IMR-90 (cell line): ENCODE measurements at regions of chr1 and their contacts with region 1.

Region 1: GRCh38 chr1:32291708-32292492 is at the start of gene HDAC1:
- DNase-seq: peak; percentile 91
- ATAC-seq: peak; percentile 99
- H3K4me3 ChIP-seq: peak within 1 kb of the TSS; percentile 98
- H3K27ac ChIP-seq: peak within 1 kb of the TSS; percentile 87
- H3K4me1 ChIP-seq: 0 out of 2 replicates have a peak, but pooled peaks cover 2% of the 10 kb centered on the region
- H3K27me3 ChIP-seq: no peaks in the 10 kb centered on the region
- CTCF ChIP-seq: no peak
- POLR2A ChIP-seq: no peak; the same call in 1 of the 2 replicates
- RAD21 ChIP-seq: no peak
- total RNA-seq, gene HDAC1: 88.9 and 95.5 TPM in 2 replicates

Region 2: DNA sequence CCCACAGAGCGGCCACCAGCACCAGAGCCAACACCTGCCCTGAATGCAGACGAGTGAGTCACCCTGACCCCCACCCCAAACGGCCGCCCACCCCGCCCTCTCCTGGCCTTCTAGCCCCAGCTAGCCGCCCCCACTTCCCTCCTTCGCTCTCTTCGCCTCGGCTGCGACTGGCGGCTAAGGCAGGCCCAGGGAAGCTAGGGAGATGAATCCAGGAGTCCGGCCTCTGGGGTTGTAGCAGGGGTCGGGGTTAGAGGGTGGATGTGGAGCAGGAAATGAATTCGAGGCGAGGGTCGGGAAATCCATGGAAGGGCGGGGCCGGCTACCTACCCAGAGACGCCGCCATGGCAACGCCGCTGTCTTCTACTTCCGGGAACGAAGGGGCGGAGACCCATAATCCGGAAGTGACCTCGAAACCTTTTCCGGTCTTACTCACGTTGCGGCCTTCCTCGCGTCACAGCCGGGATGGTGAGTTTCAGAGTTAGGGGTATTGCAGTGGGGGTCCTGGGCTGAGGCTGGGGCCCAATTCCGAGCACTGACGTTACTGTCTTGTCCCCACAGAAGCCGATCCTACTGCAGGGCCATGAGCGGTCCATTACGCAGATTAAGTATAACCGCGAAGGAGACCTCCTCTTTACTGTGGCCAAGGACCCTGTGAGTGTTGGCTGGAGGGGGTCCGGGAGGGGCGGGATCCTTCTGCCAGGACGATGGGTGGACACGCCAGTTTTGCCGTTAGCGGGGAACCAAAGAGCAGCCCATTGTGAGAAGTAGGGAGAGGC is 69.7 kb before region 1 on chr1 and contains the starts of genes EIF3I and TMEM234:
- CTCF ChIA-PET with region 1: no interaction called
- POLR2A ChIA-PET with region 1: no interaction called
- dilution Hi-C with region 1: no loop called
- in situ Hi-C with region 1: no loop called
- intact Hi-C with region 1: loop called (anchors 5 kb)
- DNase-seq: peak; percentile 91
- ATAC-seq: peak; percentile 89
- H3K4me3 ChIP-seq: peak within 1 kb of the TSS; percentile 84
- H3K27ac ChIP-seq: peak within 1 kb of the TSS; percentile 86
- H3K4me1 ChIP-seq: peaks cover 12% of the 10 kb centered on the region
- H3K27me3 ChIP-seq: no peaks in the 10 kb centered on the region
- CTCF ChIP-seq: no peak
- POLR2A ChIP-seq: peak; percentile 94
- RAD21 ChIP-seq: no peak
- total RNA-seq, gene EIF3I: 574 and 716 TPM in 2 replicates
- total RNA-seq, gene TMEM234: 10.0 and 10.8 TPM in 2 replicates

Region 3: DNA sequence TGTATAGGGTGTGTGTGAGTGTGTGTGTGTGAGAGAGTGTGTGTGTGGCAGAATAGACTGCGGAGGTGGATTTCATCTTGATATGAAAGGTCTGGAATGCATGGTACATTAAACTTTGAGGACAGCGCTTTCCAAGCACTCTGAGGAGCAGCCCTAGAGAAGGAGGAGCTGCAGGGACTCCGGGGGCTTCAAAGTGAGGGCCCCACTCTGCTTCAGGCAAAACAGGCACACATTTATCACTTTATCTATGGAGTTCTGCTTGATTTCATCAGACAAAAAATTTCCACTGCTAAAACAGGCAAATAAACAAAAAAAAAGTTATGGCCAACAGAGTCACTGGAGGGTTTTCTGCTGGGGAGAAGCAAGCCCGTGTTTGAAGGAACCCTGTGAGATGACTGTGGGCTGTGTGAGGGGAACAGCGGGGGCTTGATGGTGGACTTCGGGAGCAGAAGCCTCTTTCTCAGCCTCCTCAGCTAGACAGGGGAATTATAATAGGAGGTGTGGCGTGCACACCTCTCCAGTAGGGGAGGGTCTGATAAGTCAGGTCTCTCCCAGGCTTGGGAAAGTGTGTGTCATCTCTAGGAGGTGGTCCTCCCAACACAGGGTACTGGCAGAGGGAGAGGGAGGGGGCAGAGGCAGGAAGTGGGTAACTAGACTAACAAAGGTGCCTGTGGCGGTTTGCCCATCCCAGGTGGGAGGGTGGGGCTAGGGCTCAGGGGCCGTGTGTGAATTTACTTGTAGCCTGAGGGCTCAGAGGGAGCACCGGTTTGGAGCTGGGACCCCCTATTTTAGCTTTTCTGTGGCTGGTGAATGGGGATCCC is 18.3 kb before region 1 on chr1:
- CTCF ChIA-PET with region 1: no interaction called
- POLR2A ChIA-PET with region 1: no interaction called
- dilution Hi-C with region 1: no loop called
- in situ Hi-C with region 1: no loop called
- intact Hi-C with region 1: loop called (anchors 2 kb)
- DNase-seq: peak; percentile 9
- ATAC-seq: peak; percentile 82
- H3K4me3 ChIP-seq: no peak overlapping the region
- H3K27ac ChIP-seq: no peak overlapping the region
- H3K4me1 ChIP-seq: peaks cover 9% of the 10 kb centered on the region; the same call in 1 of the 2 replicates
- H3K27me3 ChIP-seq: peaks cover 18% of the 10 kb centered on the region
- CTCF ChIP-seq: no peak
- POLR2A ChIP-seq: no peak
- RAD21 ChIP-seq: no peak

Region 4: DNA sequence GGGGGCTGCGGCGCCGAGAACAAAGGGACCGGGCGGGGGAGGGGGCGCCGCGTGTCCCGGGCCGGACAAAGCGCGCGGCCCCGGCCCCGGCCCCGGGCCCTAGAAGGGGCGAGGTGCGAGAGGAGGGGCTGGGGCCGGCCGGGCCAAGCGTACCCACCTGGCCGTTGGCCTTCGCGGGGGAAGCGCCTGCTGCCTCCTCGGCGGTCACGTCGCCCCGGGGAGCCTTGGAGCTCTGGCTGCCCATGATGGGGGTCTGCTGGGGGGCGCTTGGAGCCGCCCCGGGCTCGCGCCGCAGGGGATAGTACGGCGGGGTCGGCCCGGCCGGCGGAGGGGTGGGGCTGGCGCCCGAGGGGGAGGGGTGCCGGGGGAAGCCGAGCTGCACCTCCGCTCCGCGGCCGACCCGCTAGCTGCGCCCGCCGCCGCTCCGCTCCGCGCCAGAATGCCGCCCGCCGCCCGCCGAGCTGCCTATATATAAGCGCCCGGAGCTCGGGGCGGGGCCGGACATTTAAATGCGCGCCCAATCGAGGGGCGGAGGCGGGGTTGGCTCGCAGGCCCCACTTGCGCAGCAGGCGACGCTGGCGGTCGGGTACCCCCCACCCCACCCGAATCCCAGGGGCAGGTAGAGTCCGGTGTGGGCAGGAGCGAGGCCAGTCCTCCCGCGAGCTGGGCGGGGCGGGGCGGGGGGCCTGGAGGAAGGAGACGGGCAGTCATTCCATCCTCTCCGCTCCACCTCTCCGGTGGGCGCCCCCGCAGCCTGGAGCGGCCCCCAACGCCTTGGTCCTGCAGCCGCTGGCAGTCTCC is 44.1 kb after region 1 on chr1 and contains the start of gene MARCKSL1:
- CTCF ChIA-PET with region 1: no interaction called
- POLR2A ChIA-PET with region 1: no interaction called
- dilution Hi-C with region 1: no loop called
- in situ Hi-C with region 1: no loop called
- intact Hi-C with region 1: no loop called
- DNase-seq: peak; percentile 55
- ATAC-seq: peak; percentile 76
- H3K4me3 ChIP-seq: peak within 1 kb of the TSS; percentile 85
- H3K27ac ChIP-seq: peak within 1 kb of the TSS; percentile 85
- H3K4me1 ChIP-seq: peaks cover 6% of the 10 kb centered on the region
- H3K27me3 ChIP-seq: no peaks in the 10 kb centered on the region
- CTCF ChIP-seq: no peak
- POLR2A ChIP-seq: peak; percentile 99
- RAD21 ChIP-seq: no peak; the same call in 1 of the 2 replicates
- total RNA-seq, gene MARCKSL1: 34.7 and 37.5 TPM in 2 replicates